CD8-positive, alpha-beta memory T cell (primary cell): ENCODE measurements at regions of chr3 and their contacts with region 1.

Region 1: DNA sequence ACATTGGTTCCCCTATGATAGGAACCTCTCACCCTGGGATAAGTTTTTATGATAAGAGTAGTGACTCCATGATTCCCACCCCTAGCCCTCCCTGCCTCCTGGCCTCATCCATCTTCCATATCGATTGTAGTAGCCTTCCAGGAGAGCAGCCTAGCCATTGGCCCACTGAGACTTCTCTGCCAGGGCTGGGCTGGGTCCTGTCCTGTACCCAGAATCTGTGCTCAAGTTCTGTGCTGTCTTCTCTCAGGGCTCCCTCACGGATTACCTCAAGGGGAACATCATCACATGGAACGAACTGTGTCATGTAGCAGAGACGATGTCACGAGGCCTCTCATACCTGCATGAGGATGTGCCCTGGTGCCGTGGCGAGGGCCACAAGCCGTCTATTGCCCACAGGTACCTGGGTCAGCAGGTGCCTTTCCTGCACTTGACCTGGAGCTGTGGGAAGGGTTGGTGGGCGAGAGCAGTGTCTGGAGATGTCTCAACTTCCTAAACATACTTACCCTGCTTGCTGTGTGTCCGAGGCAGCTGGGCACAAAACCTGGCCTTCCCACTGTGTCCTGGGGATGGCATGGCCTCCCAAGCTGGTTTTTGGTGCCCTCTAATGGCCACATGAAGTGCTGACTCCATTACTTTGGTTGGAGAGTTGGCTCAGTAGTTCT is 16.6 kb upstream of the EXOG start:
- DNase-seq: peak in 4 of 5 donors; percentile 16 to 63 (median 36)
- H3K4me3 ChIP-seq: no peak overlapping the region
- H3K4me3 Mint-ChIP-seq: no peak overlapping the region
- H3K27ac ChIP-seq: no peak overlapping the region
- H3K27ac Mint-ChIP-seq: peak overlapping the region in 4 of 8 donors; percentile 24 to 90 (median 34)
- H3K4me1 ChIP-seq: no peaks in the 10 kb centered on the region
- H3K4me1 Mint-ChIP-seq: peaks cover 1 to 2% (median 1%) of the 10 kb centered on the region in 3 donors
- H3K27me3 ChIP-seq: no peaks in the 10 kb centered on the region
- H3K27me3 Mint-ChIP-seq: no peaks in the 10 kb centered on the region

Region 2: GRCh38 chr3:38054291-38055001 is 425.1 kb before region 1 on chr3:
- CTCF ChIA-PET with region 1: no interaction called
- POLR2A ChIA-PET with region 1: no interaction called
- DNase-seq: no peak
- H3K4me3 ChIP-seq: no peak overlapping the region
- H3K4me3 Mint-ChIP-seq: no peak overlapping the region
- H3K27ac ChIP-seq: no peak overlapping the region
- H3K27ac Mint-ChIP-seq: no peak overlapping the region
- H3K4me1 ChIP-seq: no peaks in the 10 kb centered on the region
- H3K4me1 Mint-ChIP-seq: no peaks in the 10 kb centered on the region
- H3K27me3 ChIP-seq: no peaks in the 10 kb centered on the region
- H3K27me3 Mint-ChIP-seq: peaks cover 0 to 2% of the 10 kb centered on the region in 2 donors

Region 3: GRCh38 chr3:38325256-38325655 is 154.3 kb before region 1 on chr3:
- CTCF ChIA-PET with region 1: no interaction called
- POLR2A ChIA-PET with region 1: no interaction called
- DNase-seq: no peak
- H3K4me3 ChIP-seq: no peak overlapping the region
- H3K4me3 Mint-ChIP-seq: no peak overlapping the region
- H3K27ac ChIP-seq: no peak overlapping the region
- H3K27ac Mint-ChIP-seq: no peak overlapping the region
- H3K4me1 ChIP-seq: no peaks in the 10 kb centered on the region
- H3K4me1 Mint-ChIP-seq: no peaks in the 10 kb centered on the region
- H3K27me3 ChIP-seq: no peaks in the 10 kb centered on the region
- H3K27me3 Mint-ChIP-seq: peaks cover 9 to 29% of the 10 kb centered on the region in 2 donors

Region 4: GRCh38 chr3:38490281-38491030 is 10.9 kb after region 1 on chr3:
- CTCF ChIA-PET with region 1: interaction called, 13 read pairs
- POLR2A ChIA-PET with region 1: no interaction called
- DNase-seq: no peak
- H3K4me3 ChIP-seq: no peak overlapping the region
- H3K4me3 Mint-ChIP-seq: no peak overlapping the region
- H3K27ac ChIP-seq: no peak overlapping the region
- H3K27ac Mint-ChIP-seq: no peak overlapping the region
- H3K4me1 ChIP-seq: no peaks in the 10 kb centered on the region
- H3K4me1 Mint-ChIP-seq: no peaks in the 10 kb centered on the region
- H3K27me3 ChIP-seq: no peaks in the 10 kb centered on the region
- H3K27me3 Mint-ChIP-seq: no peaks in the 10 kb centered on the region

Region 5: DNA sequence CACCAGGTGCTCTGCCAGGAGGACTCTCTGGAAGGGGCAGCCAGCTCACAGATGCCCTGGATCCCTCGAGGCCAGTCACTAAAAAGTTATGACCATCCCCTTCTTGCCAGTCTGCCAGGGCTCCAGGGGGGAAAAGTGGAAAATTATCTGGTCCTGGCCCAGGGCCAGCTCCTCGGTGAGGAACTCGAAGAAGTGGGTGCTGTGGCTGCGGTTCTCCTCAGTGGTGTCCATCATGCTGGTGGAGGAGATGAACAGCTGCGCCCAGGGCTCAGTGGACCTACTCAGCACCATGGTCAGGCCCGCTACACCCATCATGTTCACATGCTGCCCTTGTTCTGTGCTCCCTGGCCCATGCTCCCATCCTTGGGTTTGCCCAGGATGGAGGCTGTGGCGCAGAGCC is 35.8 kb after region 1 on chr3:
- CTCF ChIA-PET with region 1: no interaction called
- POLR2A ChIA-PET with region 1: no interaction called
- DNase-seq: no peak
- H3K4me3 ChIP-seq: no peak overlapping the region
- H3K4me3 Mint-ChIP-seq: no peak overlapping the region
- H3K27ac ChIP-seq: no peak overlapping the region
- H3K27ac Mint-ChIP-seq: no peak overlapping the region
- H3K4me1 ChIP-seq: peaks cover 17% of the 10 kb centered on the region
- H3K4me1 Mint-ChIP-seq: peaks cover 22 to 26% (median 26%) of the 10 kb centered on the region in 3 donors
- H3K27me3 ChIP-seq: no peaks in the 10 kb centered on the region
- H3K27me3 Mint-ChIP-seq: no peaks in the 10 kb centered on the region